Caco-2 (cell line): ENCODE measurements at regions of chr2 and their contacts with region 1.

Region 1: DNA sequence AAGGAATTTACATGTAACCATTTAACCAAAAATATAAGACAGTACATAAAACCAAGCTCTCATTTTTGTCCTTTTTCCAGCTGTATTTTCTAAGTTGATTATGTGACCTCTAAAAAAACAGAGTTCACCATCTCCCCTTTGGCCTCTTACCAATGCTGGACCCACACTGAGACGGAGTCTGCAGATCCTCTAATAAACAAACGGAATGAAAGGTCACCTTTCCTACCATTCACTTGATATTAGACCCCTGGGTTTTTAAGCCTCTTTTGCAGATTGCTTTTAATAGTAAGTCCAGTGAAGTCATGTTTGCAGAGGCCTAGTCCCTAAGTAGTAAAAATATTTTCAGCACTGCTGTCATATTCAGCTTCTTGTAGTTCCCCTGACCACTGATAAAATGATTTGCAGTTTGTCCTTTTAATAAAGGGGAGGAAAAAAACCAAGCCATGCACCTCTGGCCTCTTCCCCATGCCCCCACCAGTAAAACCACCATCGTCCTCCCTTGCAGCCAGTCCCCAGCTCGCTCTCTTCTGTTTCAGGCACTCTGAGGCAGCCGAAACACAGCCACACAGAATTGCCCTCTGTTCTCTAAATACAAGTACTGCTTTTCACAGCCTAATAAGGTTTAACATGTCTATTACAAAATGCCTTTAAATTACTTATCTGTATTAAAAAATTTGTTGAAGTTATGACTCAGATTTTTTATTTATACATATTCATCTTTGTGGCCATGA is 427.5 kb downstream of the PARD3B start:
- DNase-seq: peak in 1 of 2 experiments; percentile 12
- H3K4me3 ChIP-seq: no peak overlapping the region
- H3K4me3 Mint-ChIP-seq: no peak overlapping the region
- H3K27ac Mint-ChIP-seq: peak overlapping the region; percentile 74
- H3K4me1 ChIP-seq: peaks cover 27% of the 10 kb centered on the region
- H3K4me1 Mint-ChIP-seq: peaks cover 18% of the 10 kb centered on the region
- H3K27me3 ChIP-seq: no peaks in the 10 kb centered on the region
- H3K27me3 Mint-ChIP-seq: no peaks in the 10 kb centered on the region
- CTCF ChIP-seq: no peak

Region 2: DNA sequence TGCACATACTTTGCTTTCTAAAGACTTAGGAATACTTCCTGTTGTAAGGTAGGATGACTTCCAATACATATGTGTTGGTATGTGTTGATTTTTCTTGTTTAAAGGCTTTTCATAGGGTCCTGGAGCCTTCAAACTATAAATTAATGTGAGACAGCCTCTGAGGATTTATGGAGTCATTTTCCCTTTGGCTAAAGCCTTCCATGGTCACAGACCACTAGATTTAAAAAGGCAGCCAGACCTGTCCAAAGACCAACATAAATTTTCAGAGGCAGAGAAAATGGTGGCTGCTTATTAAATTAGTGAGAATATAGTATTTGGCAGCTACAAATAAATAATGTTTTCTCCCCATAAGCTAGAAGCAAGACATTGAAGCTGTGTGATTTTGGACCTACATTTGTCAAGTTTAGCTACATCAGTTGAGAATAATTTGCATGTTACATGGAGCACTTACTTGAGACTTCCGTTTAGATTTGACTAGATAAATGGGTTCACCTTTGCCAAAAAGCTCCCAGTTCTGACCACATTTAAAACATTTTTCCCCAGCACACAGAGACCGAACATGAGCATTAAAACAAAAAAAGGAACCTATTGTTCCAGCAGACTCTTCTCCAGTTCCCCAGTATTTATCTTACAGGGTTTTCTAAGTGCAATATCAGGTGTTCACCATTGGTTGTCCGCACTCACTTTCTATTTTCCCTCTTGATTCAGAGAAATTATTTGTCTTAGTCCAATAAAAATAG is 24.6 kb before region 1 on chr2:
- CTCF ChIA-PET with region 1: no interaction called
- POLR2A ChIA-PET with region 1: no interaction called
- intact Hi-C with region 1: loop called (anchors 2 kb)
- DNase-seq: no peak
- H3K4me3 ChIP-seq: no peak overlapping the region
- H3K4me3 Mint-ChIP-seq: peak overlapping the region; percentile 8
- H3K27ac Mint-ChIP-seq: peak overlapping the region; percentile 61
- H3K4me1 ChIP-seq: peaks cover 41% of the 10 kb centered on the region
- H3K4me1 Mint-ChIP-seq: peaks cover 42% of the 10 kb centered on the region
- H3K27me3 ChIP-seq: no peaks in the 10 kb centered on the region
- H3K27me3 Mint-ChIP-seq: no peaks in the 10 kb centered on the region
- CTCF ChIP-seq: no peak

Region 3: DNA sequence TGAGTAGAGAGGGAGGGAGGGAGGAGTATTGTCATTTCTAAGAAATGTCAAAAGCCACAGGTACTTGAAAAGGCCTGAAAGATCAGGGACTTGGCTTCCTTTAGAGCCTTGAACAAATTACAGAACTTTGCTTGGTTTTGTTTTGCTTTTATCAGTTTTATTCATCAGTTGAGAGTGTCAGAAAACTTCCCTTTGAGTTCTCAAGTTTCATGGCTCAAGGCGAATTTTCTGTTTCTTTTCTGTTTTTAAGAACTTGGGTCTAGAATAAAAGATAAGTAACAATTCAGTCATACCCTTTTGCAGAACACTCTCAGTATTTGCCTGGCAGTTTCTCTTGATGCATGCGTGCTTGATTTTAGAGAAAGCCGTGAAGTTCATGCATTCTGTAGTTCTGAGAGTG is 104.4 kb after region 1 on chr2:
- CTCF ChIA-PET with region 1: no interaction called
- POLR2A ChIA-PET with region 1: no interaction called
- intact Hi-C with region 1: no loop called
- DNase-seq: no peak
- H3K4me3 ChIP-seq: no peak overlapping the region
- H3K4me3 Mint-ChIP-seq: no peak overlapping the region
- H3K27ac Mint-ChIP-seq: no peak overlapping the region
- H3K4me1 ChIP-seq: no peaks in the 10 kb centered on the region
- H3K4me1 Mint-ChIP-seq: no peaks in the 10 kb centered on the region
- H3K27me3 ChIP-seq: no peaks in the 10 kb centered on the region
- H3K27me3 Mint-ChIP-seq: no peaks in the 10 kb centered on the region
- CTCF ChIP-seq: no peak

Region 4: GRCh38 chr2:205311201-205311600 is 338.4 kb after region 1 on chr2:
- CTCF ChIA-PET with region 1: no interaction called
- POLR2A ChIA-PET with region 1: no interaction called
- intact Hi-C with region 1: no loop called
- DNase-seq: no peak
- H3K4me3 ChIP-seq: no peak overlapping the region
- H3K4me3 Mint-ChIP-seq: no peak overlapping the region
- H3K27ac Mint-ChIP-seq: no peak overlapping the region
- H3K4me1 ChIP-seq: no peaks in the 10 kb centered on the region
- H3K4me1 Mint-ChIP-seq: no peaks in the 10 kb centered on the region
- H3K27me3 ChIP-seq: no peaks in the 10 kb centered on the region
- H3K27me3 Mint-ChIP-seq: no peaks in the 10 kb centered on the region
- CTCF ChIP-seq: no peak